PC-9 (cell line): ENCODE measurements at regions of chr4 and their contacts with region 1.

Region 1: DNA sequence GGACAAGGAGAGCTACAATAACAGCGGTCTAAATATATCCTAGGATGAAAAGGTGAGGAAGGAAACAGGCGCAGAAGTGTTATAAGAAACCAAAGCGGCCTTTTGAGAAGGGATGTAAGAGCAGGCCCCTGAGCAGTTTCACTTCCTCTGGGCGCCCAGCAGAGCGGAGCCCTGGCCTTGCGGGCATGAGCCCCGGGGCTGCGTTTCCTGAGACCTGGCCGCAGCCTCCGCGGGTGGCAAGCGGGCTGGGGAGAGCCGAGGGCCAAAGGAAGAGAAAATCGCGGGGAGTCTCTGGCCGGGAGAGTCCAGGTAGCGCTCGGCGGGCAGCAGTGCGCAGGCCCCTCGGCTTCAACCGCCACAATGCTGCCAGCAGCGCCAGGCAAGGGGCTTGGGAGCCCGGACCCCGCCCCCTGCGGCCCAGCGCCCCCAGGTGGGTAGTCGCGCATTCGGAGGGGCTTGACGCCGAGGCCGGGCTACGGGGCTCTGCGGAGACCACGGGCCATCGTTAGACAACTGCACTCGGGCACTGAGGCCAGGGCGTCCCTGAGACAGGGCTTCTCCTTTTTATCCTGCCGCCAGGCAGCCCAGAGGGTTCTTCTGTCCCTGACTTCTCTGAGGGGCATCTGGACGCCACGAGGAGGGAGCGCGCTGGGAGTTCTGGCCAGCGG is at the start of gene BANK1:
- DNase-seq: peak in 1 of 2 experiments; percentile 41
- H3K4me3 ChIP-seq: peak within 1 kb of the TSS; percentile 66
- H3K27ac ChIP-seq: no peak within 1 kb of the TSS
- H3K4me1 ChIP-seq: no peaks in the 10 kb centered on the region
- H3K27me3 ChIP-seq: no peaks in the 10 kb centered on the region
- CTCF ChIP-seq: no peak; the same call in 1 of the 2 replicates
- total RNA-seq, gene BANK1: 2.2 and 2.7 TPM in 2 replicates

Region 2: DNA sequence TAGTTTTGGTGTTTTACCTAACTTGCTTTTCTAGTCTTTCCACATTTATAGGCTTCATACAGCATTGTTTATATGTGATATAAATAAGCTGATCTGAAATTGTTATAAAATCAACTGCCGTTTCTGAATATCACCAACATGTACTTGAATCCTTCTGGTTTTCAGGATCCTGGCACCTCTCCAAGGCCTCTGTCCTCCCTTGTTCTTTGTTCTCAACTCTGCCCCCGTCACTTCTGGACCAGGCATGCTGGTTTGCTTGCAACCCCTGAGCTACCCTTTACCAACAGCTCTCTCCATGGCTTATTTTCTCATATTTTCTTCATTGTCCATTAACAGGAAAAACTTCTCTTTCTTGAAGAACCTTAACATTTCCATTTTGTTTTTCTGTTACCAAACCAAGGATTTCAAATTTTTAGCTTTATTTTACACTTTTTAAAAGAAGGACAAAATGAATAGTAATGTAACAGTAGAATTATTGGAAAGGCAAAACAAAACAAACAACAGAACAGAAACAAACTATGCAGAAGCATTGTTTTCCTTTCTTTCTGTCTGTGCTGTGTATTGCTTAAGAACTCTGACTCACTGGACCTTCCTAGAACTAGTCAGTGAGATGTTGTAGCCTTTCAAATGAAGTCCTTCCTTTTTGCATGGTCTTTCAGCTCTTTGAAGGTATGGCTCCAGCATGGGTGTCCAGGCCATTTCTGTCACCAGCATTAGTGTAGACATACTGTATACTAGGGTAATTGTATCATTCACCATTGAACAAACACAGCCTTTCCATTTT is 44.7 kb after region 1 on chr4:
- CTCF ChIA-PET with region 1: no interaction called
- POLR2A ChIA-PET with region 1: no interaction called
- intact Hi-C with region 1: loop called (anchors 2 kb)
- DNase-seq: peak; percentile 32 to 49
- H3K4me3 ChIP-seq: no peak overlapping the region
- H3K27ac ChIP-seq: no peak overlapping the region
- H3K4me1 ChIP-seq: peaks cover 7% of the 10 kb centered on the region; the same call in 1 of the 2 replicates
- H3K27me3 ChIP-seq: no peaks in the 10 kb centered on the region
- CTCF ChIP-seq: no peak

Region 3: DNA sequence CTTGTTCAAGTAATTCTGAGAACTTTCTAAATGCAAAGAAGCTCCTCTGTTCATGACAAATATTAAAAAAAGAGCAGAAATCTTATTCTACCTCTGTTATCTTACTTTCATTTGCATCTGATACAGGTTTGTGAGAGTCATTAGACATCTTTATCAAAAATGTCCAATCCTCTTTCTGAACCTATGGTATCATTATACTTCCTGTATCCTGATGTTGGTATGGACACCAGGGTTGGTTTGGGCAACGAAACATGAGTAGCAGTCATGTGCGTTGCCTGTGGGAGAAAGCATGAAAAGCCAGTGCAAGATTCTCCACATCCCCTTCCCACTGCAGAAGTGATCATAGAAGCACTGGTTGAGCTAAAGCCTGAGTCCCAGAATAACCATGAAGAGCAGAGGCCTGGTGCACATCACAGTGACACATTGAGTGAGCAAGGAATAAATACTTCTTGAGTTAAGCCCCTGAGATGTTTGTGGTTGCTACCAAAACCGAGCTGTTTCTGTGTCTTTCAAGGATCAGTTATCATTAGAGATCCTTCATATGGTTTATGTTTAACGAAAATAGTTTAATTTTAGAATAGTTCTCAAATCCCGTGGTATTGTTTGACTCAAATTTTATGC is 197.1 kb after region 1 on chr4:
- CTCF ChIA-PET with region 1: no interaction called
- POLR2A ChIA-PET with region 1: no interaction called
- intact Hi-C with region 1: loop called (anchors 10 kb)
- DNase-seq: no peak
- H3K4me3 ChIP-seq: no peak overlapping the region
- H3K27ac ChIP-seq: no peak overlapping the region
- H3K4me1 ChIP-seq: peaks cover 2% of the 10 kb centered on the region; the same call in 1 of the 2 replicates
- H3K27me3 ChIP-seq: no peaks in the 10 kb centered on the region
- CTCF ChIP-seq: no peak